GM18951 (cell line): ENCODE measurements at regions of chr17 and their contacts with region 1.

Region 1: GRCh38 chr17:41392278-41392677 is 5.1 kb downstream of the KRT31 start:
- POLR2A ChIP-seq: no peak

Region 2: DNA sequence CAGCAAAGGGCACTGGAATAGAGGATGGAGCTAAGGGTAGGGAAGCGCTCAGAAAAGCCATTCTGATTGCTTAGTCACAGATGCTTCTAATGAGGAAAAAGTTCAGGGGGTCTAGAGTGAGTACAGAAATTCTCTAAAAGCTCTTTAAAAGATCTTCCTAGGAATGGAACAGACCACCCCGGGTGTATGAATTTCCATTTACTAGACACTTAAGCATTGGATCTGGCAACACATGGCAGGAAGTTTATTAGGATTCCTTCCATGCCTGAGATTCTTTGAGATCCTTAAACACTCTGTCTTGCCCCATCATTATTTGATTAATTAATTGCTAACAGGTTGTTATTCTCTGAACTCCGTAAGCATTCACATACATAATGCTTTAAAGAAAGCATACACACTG is 108.2 kb before region 1 on chr17:
- in situ Hi-C with region 1: loop called (anchors 10 kb)
- POLR2A ChIP-seq: no peak

Region 3: GRCh38 chr17:41301916-41302901 is 90.1 kb before region 1 on chr17 and contains the start of gene KRTAP29-1:
- in situ Hi-C with region 1: no loop called
- POLR2A ChIP-seq: no peak

Region 4: DNA sequence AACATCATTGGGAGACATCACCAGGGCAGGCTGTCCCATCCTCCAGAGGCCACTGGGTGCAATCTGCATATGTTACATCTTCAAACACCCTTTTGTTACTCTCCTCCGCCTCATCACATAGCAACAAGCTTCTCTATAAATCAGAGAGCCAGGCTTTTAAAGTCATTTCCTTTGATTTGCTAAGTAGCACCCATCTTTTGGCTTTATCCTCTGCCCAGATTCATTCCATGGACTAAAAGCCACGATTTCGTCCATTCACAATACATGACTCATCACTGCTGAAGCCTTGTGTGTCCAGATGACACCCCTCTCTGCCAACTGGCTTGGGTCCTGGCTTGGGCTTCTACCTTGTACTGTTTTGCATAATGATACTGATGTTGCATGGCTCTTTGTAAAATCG is 50.5 kb after region 1 on chr17:
- in situ Hi-C with region 1: no loop called
- POLR2A ChIP-seq: no peak